OCI-LY7 (cell line): ENCODE measurements at regions of chr3 and their contacts with region 1.

Region 1: GRCh38 chr3:111978493-111979433 is at the start of gene ABHD10:
- DNase-seq: peak; percentile 98
- H3K4me3 ChIP-seq: peak within 1 kb of the TSS; percentile 87
- H3K27ac ChIP-seq: peak within 1 kb of the TSS; percentile 49
- H3K4me1 ChIP-seq: peaks cover 27% of the 10 kb centered on the region
- CTCF ChIP-seq: no peak
- total RNA-seq, gene ABHD10: 25.8 and 40.8 TPM in 2 replicates

Region 2: GRCh38 chr3:111418391-111418790 is 560.4 kb before region 1 on chr3:
- CTCF ChIA-PET with region 1: no interaction called
- POLR2A ChIA-PET with region 1: no interaction called
- intact Hi-C with region 1: no loop called
- DNase-seq: no peak
- H3K4me3 ChIP-seq: no peak overlapping the region
- H3K27ac ChIP-seq: no peak overlapping the region
- H3K4me1 ChIP-seq: no peaks in the 10 kb centered on the region
- CTCF ChIP-seq: no peak

Region 3: DNA sequence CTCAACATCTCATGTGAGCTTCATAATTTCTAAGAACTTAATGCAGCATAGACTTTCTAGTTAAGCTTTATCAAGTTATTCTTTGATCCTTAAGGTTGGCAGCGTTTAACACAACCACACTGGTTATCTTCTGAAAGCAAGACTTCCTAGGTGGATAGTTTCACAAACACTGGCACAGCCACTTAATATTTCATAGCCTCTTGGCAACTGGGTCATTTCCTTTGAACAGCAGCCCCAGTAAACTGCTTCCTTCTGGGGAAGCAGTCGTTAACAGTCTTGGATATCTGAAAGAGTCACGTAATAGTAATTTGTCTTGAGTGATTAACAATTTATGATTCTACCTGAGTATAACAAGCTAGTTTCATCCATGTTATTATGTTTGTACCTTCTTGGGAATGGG is 45.8 kb before region 1 on chr3:
- CTCF ChIA-PET with region 1: no interaction called
- POLR2A ChIA-PET with region 1: no interaction called
- intact Hi-C with region 1: no loop called
- DNase-seq: no peak
- H3K4me3 ChIP-seq: no peak overlapping the region
- H3K27ac ChIP-seq: no peak overlapping the region
- H3K4me1 ChIP-seq: no peaks in the 10 kb centered on the region
- CTCF ChIP-seq: no peak

Region 4: GRCh38 chr3:111989061-111989678 is 10.4 kb after region 1 on chr3:
- CTCF ChIA-PET with region 1: interaction called, 12 read pairs
- POLR2A ChIA-PET with region 1: interaction called, 32 read pairs
- intact Hi-C with region 1: no loop called
- DNase-seq: peak; percentile 68
- H3K4me3 ChIP-seq: no peak overlapping the region
- H3K27ac ChIP-seq: no peak overlapping the region
- H3K4me1 ChIP-seq: no peaks in the 10 kb centered on the region
- CTCF ChIP-seq: peak; percentile 92